ENCODE measurements at regions of chr9 and their contacts with region 1.

Region 1: GRCh38 chr9:113463418-113464285 is at the start of gene RGS3:
- DNase-seq: peak; percentile 84
- total RNA-seq, gene RGS3: 52.7 and 74.5 TPM in 2 replicates

Region 2: GRCh38 chr9:113657703-113658544 is 194.3 kb after region 1 on chr9:
- in situ Hi-C with region 1: loop called (anchors 10 kb)
- DNase-seq: peak; percentile 63

Region 3: GRCh38 chr9:114271641-114272081 is 808.0 kb after region 1 on chr9:
- in situ Hi-C with region 1: no loop called
- DNase-seq: no peak